Left cardiac atrium (tissue), 4 donors: ENCODE measurements at regions of chr15 and their contacts with region 1.

Region 1: DNA sequence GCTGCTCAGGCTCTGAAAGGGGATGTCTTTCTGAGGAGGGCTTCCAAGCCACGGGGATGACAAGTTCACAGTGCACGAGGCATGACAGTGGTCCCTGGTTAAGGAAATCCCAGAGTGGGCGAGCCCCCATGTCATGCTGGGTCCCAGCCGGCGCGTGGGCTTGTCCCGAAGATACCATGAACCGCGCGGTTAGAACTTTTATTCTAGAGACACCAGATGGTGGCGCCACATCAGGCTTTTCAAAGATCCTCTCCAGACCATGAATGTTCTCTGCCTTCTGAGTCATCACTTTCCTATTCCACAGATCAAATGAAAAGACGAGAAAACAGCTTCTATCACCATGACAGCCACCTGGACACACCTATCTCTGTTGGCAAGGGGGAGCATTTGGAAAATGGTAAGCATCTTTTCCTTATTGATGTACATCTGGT is 227.8 kb upstream of the LYSMD4 start:
- DNase-seq: peak; percentile 45
- ATAC-seq: peak; percentile 41 to 63

Region 2: DNA sequence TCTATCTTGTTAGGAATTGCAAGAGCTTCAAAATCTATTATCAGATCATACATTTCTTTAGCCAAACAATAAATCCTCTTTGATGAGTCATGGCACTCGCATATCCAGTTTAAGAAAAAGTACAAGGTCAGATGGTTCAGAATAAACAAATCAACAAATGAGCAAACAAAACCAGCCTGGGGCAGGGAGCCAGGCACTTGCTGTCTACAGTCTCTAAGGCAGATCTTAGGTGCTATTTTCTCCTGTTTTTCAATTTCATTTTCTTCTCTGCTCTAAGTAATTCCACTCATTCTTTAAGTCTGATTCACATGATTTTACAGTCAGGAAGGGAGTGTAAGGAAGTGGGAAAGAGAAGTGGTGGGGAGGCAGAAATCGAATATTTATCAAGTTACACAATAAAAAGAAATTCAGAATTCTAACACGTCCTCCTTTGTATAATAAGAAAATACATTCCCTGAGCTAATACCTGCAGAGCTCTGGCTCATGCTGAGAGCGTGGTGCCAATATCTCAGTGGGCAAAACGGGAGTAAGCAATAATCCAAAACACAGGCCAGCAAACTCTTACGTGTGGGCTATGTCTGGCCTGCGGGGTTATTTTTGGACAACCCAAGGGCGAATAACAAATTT is 82.1 kb after region 1 on chr15:
- intact Hi-C with region 1: loop called in 1 of 2 experiments (anchors 10 kb)
- DNase-seq: no peak
- ATAC-seq: peak in 1 of 2 donors; percentile 92

Region 3: DNA sequence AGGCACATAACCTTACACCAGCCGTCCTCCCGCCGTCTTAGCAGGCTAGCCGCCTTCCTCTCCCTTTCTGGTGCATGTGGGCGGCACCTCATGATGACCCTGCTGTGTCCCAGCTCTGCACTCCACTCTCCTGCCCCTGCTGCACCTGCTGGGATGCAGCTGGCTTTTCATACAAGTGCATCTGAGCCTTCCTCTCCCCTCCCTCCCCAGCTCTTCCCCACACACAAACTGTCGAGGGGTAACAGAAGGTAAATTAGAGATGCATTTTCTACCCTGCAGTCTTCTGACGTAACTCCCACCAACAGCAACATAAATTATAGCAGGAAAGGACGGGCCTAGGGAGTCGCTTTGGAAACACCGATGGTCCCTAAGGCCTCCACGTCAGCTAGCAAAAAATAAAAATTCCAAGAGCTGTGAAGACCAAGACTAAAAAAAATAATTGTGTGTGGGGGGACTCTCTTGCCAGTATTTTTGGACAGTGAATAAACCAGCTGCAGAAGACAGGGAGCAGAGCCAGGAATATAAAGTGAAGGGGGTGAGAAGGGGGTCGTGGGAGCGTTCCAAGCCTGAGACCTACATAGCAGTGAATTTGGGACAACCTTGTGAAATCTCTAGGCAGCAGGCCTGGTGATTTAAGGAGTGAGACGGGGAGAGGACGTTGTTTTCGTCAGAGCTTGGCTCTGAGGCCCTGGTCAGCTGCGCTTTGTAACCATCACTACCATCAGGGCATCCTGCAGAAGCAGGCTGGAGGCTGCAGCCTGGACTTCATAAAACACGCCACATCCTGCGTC is 164.6 kb after region 1 on chr15:
- intact Hi-C with region 1: loop called in 1 of 2 experiments (anchors 10 kb)
- DNase-seq: peak; percentile 80
- ATAC-seq: peak; percentile 82 to 93